Colonic mucosa (tissue), 4 donors: ENCODE measurements at regions of chr7 and their contacts with region 1.

Region 1: DNA sequence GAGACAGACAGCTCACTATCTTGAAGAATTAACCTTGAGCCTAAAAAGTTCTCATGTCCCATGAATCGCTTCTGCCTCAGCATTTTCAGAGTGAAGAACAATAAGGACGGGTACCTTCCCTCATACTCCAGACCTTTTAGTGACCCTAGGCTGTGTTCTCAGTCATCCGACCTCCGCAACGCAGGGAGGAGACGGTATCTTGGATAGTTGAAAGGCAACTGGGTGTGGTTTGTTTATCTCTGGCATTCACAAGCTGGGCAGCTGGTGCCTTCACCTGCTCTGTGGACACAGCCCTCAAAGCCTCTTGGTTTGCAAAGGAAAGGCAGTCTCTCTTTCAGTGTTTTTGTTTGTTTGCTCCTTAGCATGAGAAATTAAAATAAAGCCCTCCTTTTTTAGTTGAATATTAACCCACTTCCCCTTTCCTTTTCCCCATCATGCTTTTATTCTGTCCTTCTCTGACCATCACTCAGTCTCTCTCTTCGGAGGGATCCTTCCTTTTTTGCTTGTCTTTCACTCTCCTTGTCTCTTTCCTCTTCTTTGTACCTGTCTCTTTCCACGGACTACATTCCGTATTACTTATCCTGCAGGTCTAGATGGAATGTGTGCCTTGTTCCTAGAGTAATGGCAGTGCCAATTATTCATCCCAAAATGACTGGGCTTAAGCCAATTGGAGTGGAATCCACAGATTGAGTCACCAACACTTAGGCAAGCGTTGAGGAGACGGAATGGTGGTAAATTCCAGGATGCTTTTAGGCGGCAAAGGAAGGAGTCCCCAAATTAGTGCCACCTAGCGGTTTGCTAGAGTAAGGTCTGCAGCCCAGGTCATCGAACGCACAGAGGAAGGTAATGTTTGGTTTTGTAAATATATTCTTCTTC is 45.8 kb downstream of the PRR15 start:
- DNase-seq: peak; percentile 79
- H3K4me3 ChIP-seq: no peak overlapping the region
- H3K27ac ChIP-seq: peak overlapping the region; percentile 70
- H3K4me1 ChIP-seq: no peaks in the 10 kb centered on the region
- H3K27me3 ChIP-seq: no peaks in the 10 kb centered on the region
- CTCF ChIP-seq: peak; percentile 80

Region 2: DNA sequence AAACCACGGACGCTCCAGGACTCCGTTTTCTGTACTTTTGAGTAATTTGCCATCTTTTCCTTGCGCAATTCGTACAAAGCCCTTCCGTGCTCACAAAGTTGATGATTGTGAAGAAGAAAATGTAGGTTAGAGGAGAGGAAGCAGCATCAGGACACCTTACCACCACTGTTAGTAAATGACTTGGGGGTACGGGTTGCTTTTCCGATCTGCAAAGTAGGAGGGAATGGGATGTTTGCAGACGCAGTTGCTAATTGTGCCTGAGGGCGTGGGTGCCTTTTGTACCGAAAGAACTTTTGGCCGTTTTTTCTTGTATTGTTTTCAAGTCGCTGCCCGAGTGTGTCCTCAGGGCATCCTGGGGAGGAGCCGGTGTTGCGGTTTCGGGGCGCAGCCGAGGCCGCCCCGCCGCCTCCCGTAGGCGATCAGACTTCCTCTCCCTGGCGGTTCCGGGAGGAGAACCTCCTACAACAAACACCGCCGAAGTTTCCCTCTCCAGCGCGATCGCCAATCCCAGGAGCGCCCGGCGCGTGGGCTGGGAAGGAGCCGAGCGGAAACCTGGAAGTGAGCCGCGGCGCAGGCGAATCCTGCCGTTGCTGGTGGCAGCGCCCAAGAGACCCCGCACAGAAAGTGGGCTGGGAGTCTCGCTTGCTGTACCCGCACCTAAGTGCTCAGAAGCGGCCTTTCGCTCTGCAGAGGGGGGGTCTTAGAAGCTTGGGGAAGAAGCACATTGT is 44.7 kb before region 1 on chr7:
- intact Hi-C with region 1: loop called (anchors 5 kb)
- DNase-seq: peak; percentile 75
- H3K4me3 ChIP-seq: peak overlapping the region; percentile 49
- H3K27ac ChIP-seq: peak overlapping the region; percentile 83
- H3K4me1 ChIP-seq: no peaks in the 10 kb centered on the region
- H3K27me3 ChIP-seq: no peaks in the 10 kb centered on the region
- CTCF ChIP-seq: no peak

Region 3: DNA sequence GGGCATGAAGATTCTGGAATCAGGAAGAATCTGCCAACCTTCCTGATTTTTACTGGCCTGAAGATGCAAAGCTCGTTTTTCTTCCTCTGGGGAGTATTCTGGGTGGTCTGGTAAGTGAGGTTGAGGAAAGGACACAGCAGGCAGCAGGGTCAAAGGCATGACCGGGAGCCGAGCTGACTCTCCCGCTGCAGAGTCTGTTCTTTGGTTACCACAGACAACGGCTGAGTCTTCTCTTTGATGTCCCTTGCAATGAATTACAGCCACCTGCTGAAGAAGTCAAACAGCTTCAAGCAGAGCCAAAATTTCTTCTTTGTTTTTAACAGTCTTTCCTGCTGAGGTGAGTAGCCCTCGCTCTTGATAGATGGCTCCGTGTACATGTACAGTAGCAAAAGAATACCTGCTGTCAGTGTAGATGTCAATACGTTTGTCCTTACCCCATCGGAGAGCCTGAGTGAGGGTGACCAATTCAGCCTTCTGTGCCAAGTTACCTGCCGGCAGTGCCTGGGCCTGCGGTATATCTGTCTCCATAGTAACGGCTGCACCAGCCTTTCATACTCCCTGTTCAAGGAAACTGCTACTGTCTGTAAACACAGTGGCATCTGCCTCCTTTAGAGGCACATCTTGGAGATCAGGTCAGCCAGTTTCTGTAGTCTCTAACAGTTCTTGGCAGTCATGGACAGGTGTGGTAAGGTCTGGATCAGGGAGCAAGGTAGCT is 30.6 kb after region 1 on chr7:
- intact Hi-C with region 1: no loop called
- DNase-seq: no peak
- H3K4me3 ChIP-seq: no peak overlapping the region
- H3K27ac ChIP-seq: no peak overlapping the region
- H3K4me1 ChIP-seq: peaks cover 4% of the 10 kb centered on the region
- H3K27me3 ChIP-seq: no peaks in the 10 kb centered on the region
- CTCF ChIP-seq: no peak